Dendritic cell treated with granulocyte-macrophage colony-stimulating factor and Interleukin-4, amounts not matched to agents 40 ng/mL and 50 ng/mL, for 4 days (primary cell): ENCODE measurements at regions of chr1 and their contacts with region 1.

Region 1: DNA sequence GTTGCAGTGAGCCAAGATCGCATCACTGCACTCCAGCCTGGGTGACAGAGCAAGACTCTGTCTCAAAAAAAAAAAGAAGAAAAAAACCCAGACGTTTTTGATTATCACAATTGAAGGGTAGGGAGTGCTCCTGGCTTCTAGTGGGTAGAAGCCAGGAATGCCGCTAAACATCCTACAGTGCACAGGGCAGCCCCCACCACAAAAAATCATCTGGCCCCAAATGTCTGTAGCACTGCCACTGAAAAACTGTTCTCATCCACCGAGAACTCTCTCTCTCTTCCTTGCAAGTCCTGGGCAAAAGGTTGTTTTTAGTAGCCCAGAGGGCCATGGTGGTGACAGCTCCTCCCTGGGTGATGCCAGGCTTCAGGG is 35.6 kb upstream of the GPR157 start:
- H3K4me3 Mint-ChIP-seq: peak overlapping the region; percentile 13
- H3K27ac Mint-ChIP-seq: peak overlapping the region; percentile 97
- H3K4me1 Mint-ChIP-seq: peaks cover 56% of the 10 kb centered on the region
- H3K27me3 Mint-ChIP-seq: peaks cover 9% of the 10 kb centered on the region

Region 2: GRCh38 chr1:9101510-9102146 is 62.9 kb before region 1 on chr1:
- intact Hi-C with region 1: no loop called
- H3K4me3 Mint-ChIP-seq: no peak overlapping the region
- H3K27ac Mint-ChIP-seq: no peak overlapping the region
- H3K4me1 Mint-ChIP-seq: no peaks in the 10 kb centered on the region
- H3K27me3 Mint-ChIP-seq: no peaks in the 10 kb centered on the region

Region 3: GRCh38 chr1:9128520-9129265 is 35.8 kb before region 1 on chr1 and contains the start of gene GPR157:
- intact Hi-C with region 1: loop called (anchors 5 kb)
- H3K4me3 Mint-ChIP-seq: peak within 1 kb of the TSS; percentile 81
- H3K27ac Mint-ChIP-seq: peak within 1 kb of the TSS; percentile 81
- H3K4me1 Mint-ChIP-seq: peaks cover 38% of the 10 kb centered on the region
- H3K27me3 Mint-ChIP-seq: peaks cover 42% of the 10 kb centered on the region

Region 4: DNA sequence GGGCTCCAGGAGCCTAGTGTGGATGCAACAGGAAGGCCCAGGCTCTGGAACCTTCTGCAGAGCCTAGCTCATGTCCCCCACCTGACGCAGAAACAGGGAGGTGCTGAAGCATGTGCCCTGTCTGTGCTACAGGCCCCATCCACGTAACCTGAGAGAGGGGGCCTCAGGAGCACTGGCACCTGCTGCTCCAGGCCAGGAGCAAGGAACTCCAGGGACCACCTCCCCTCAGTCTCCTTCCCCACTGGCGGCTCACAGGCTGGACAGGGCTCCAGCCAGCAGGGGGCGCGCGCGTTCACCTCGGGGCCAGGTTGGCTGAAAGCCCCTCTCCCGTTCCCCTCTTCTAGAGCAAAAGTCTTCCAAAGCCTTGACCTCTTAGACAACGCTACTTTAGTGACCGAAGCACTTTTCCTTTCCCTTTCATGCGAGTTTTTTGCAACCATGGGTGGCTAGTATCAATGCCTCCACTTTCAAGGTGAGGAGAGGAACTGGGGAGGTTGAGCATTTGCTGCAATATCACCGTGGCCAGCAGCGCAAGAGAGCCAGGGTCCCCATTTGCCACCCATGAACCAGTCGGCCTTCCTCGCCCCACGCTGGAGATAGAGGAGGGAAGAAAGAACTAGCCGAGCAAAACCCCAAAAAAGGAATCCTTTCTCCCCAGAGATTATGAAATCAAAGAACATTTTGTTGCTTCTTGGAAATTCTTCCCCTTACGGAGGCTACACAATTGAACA is 16.8 kb after region 1 on chr1:
- intact Hi-C with region 1: loop called (anchors 2 kb)
- H3K4me3 Mint-ChIP-seq: peak overlapping the region; percentile 82
- H3K27ac Mint-ChIP-seq: peak overlapping the region; percentile 91
- H3K4me1 Mint-ChIP-seq: peaks cover 39% of the 10 kb centered on the region
- H3K27me3 Mint-ChIP-seq: peaks cover 46% of the 10 kb centered on the region